ENCODE measurements at regions of chr21 and their contacts with region 1.

Region 1: DNA sequence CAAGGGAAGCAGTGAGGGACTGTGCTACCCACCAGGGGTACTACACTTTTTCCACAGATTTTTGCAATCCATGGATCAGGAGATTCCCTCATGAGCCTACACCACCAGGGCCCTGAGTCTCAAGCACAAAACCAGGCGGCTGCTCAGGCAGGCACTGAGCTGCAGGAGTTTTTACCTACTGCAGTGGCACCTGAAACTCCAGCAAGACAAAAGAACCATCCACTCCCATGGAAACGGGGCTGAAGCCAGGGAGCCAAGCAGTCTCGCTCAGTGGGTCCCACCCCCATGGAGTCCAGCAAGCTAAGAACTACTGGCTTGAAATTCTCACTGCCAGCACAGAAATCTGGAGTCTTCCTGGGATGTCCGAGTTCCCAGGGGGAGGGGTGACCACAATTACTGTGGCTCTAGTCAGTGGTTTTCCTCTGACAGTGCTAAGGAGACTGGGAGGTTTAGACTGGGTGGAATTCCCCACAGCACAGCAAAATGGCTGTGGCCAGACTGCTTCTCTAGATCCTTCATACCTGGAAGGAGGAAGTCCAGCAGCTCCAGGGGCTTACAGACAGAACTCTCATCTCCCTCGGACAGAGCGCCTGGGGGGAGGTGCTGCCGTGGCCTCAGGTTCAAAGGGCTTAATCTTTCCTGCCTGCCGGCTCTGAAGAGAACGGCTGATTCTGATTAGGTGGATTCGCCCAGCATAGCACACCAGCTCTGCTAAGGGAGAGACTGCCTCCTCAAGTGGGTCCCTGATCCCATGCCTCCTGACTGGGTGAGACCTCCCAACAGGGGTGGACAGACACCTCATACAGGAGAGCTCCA is 437.8 kb downstream of the LTN1 start:
- DNase-seq: no peak
- ATAC-seq: no peak
- H3K4me3 ChIP-seq: no peak overlapping the region
- H3K27ac ChIP-seq: no peak overlapping the region
- H3K4me1 ChIP-seq: no peaks in the 10 kb centered on the region
- H3K27me3 ChIP-seq: no peaks in the 10 kb centered on the region
- CTCF ChIP-seq: no peak
- POLR2A ChIP-seq: no peak

Region 2: GRCh38 chr21:28480470-28480869 is 74.4 kb before region 1 on chr21:
- intact Hi-C with region 1: no loop called
- DNase-seq: no peak
- ATAC-seq: no peak
- H3K4me3 ChIP-seq: no peak overlapping the region
- H3K27ac ChIP-seq: no peak overlapping the region
- H3K4me1 ChIP-seq: no peaks in the 10 kb centered on the region
- H3K27me3 ChIP-seq: no peaks in the 10 kb centered on the region
- CTCF ChIP-seq: no peak
- POLR2A ChIP-seq: no peak

Region 3: DNA sequence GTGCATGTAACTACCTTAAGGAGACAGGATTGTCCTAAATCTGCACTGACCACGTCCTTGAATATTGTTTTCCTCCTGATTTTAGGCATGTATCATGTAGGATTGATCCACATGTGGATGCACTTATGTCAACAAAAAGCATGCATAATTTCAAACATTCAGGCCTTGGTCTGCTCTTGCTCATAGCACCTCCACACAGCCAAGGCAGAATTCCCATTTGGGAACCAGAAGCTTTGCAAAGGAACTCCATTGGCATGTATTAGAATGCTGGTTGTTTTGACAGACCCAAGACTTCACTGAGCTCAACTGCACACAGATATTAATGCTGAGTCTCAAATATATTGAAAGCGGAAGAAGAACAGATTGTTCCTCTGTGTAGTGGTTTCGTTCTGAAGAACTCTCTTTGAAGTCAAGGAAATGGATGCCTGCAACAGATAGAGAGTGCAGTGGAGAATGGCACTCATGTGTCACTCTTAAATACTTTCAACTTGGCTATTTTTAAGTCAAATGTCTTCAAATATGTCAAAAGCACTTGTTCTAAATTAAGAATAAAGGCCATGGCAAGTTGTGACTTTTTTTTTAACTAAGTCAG is 50.2 kb after region 1 on chr21:
- intact Hi-C with region 1: loop called in 1 of 10 experiments (anchors 10 kb)
- DNase-seq: no peak
- ATAC-seq: peak in 3 of 4 donors; percentile 18 to 38 (median 31)
- H3K4me3 ChIP-seq: no peak overlapping the region
- H3K27ac ChIP-seq: no peak overlapping the region
- H3K4me1 ChIP-seq: peaks cover 0 to 7% (median 0%) of the 10 kb centered on the region in 12 donors
- H3K27me3 ChIP-seq: no peaks in the 10 kb centered on the region
- CTCF ChIP-seq: no peak
- POLR2A ChIP-seq: no peak

Region 4: DNA sequence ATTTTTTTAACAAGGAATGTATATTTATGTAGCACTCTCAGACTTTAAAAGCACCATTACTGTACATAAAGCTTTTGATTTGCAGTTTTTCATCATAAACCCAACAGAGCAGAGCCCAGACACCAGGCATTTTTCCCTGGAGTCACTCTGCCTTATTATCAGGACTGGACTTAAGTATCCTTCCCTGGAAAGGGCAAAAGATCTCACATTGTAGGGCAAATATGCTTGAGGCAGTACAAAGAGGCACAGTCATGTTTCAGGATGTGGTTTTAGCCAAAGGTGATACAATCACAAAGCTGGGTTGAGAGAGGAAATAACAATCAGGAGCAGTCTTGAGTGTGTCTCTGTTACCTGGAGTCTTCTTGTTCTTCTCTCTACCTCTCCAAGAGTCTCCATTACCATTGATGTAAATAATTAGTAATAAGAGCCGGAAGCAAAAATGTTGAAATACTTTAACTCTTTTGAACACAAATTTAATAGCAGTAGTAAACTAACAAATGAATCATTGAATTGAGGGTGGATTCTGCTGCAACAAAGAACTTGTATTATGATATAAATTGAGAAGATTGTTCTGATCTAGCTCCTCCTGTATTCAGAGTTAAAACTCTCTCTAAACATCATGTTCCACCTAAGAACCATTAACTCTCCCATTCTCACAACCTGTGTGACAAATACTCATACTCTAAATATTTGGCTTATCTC is 277.3 kb after region 1 on chr21:
- intact Hi-C with region 1: no loop called
- DNase-seq: no peak
- ATAC-seq: no peak
- H3K4me3 ChIP-seq: no peak overlapping the region
- H3K27ac ChIP-seq: peak overlapping the region in 1 of 12 donors; percentile 67
- H3K4me1 ChIP-seq: peaks cover 0 to 14% (median 0%) of the 10 kb centered on the region in 12 donors
- H3K27me3 ChIP-seq: no peaks in the 10 kb centered on the region
- CTCF ChIP-seq: no peak
- POLR2A ChIP-seq: no peak